ENCODE measurements at regions of chr11 and their contacts with region 1.

Region 1: GRCh38 chr11:18395735-18396504 is 1.6 kb downstream of the LDHA start:
- DNase-seq: peak; percentile 97
- H3K4me3 Mint-ChIP-seq: peak overlapping the region; percentile 99
- H3K27ac Mint-ChIP-seq: peak overlapping the region; percentile 96
- H3K4me1 Mint-ChIP-seq: peaks cover 61% of the 10 kb centered on the region
- H3K27me3 Mint-ChIP-seq: no peaks in the 10 kb centered on the region

Region 2: DNA sequence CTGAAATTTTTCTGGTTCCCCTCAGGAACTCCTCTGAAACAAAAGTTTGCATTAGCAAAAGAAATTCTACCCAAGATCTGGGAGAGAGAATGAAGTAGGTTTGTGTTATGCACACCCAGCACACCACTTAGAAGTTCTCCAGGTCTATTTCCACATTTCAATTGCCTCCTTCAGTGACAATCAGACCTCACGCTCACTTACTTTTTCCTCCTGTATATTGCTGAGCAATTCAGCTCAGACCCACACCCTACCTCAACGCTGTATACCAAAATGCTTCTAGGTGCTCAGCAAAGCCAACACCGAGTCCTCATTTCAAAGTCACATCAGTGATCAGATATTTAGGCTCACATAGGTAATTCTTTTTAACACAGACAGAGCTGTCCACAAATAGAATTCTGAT is 244.3 kb before region 1 on chr11:
- CTCF ChIA-PET with region 1: no interaction called
- POLR2A ChIA-PET with region 1: no interaction called
- DNase-seq: no peak
- H3K4me3 Mint-ChIP-seq: no peak overlapping the region
- H3K27ac Mint-ChIP-seq: no peak overlapping the region
- H3K4me1 Mint-ChIP-seq: no peaks in the 10 kb centered on the region
- H3K27me3 Mint-ChIP-seq: peaks cover 18% of the 10 kb centered on the region

Region 3: GRCh38 chr11:18243783-18244362 is 152.0 kb before region 1 on chr11:
- CTCF ChIA-PET with region 1: interaction called, 26 read pairs
- POLR2A ChIA-PET with region 1: interaction called, 59 read pairs
- DNase-seq: peak; percentile 76
- H3K4me3 Mint-ChIP-seq: no peak overlapping the region
- H3K27ac Mint-ChIP-seq: no peak overlapping the region
- H3K4me1 Mint-ChIP-seq: peaks cover 35% of the 10 kb centered on the region
- H3K27me3 Mint-ChIP-seq: peaks cover 17% of the 10 kb centered on the region

Region 4: GRCh38 chr11:18270102-18270501 is 125.8 kb before region 1 on chr11:
- CTCF ChIA-PET with region 1: no interaction called
- POLR2A ChIA-PET with region 1: no interaction called
- DNase-seq: no peak
- H3K4me3 Mint-ChIP-seq: no peak overlapping the region
- H3K27ac Mint-ChIP-seq: no peak overlapping the region
- H3K4me1 Mint-ChIP-seq: peaks cover 15% of the 10 kb centered on the region
- H3K27me3 Mint-ChIP-seq: no peaks in the 10 kb centered on the region

Region 5: DNA sequence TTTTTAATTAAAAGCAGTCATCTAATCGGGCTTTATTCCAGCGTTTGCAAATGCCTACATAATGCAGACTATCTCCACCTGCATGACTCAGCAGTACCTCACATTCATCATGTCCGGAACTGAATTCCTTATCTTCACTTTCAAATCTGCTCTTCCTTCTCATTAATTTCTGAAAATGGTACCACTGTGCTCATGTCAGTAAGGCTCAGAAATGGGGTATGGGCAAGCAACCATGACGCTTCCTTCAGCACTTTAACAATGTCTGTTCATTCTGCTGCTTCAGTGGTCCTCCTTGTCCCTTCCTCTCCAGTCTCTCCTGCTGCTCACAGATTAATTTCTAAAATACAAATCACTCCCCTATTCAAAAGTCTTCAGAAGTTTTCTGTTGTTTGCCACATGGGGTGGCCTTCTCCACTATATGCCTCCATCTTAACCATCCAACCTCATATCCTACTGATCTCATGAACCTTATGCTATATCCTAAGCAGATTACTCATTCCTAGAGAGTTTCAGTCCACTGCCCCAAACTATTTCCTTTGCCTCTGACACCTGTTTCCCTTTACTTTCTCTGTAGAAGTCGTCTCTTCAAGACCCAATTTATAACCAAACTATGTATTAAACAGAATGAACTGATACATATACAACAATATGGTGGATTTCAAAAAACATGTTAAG is 66.6 kb before region 1 on chr11:
- CTCF ChIA-PET with region 1: no interaction called
- POLR2A ChIA-PET with region 1: interaction called, 16 read pairs
- DNase-seq: no peak
- H3K4me3 Mint-ChIP-seq: peak overlapping the region; percentile 1
- H3K27ac Mint-ChIP-seq: peak overlapping the region; percentile 65
- H3K4me1 Mint-ChIP-seq: peaks cover 70% of the 10 kb centered on the region
- H3K27me3 Mint-ChIP-seq: no peaks in the 10 kb centered on the region

Region 6: GRCh38 chr11:18374956-18375355 is 21.0 kb before region 1 on chr11:
- CTCF ChIA-PET with region 1: interaction called, 6 read pairs
- POLR2A ChIA-PET with region 1: interaction called, 14 read pairs
- DNase-seq: no peak
- H3K4me3 Mint-ChIP-seq: no peak overlapping the region
- H3K27ac Mint-ChIP-seq: no peak overlapping the region
- H3K4me1 Mint-ChIP-seq: no peaks in the 10 kb centered on the region
- H3K27me3 Mint-ChIP-seq: no peaks in the 10 kb centered on the region

Region 7: DNA sequence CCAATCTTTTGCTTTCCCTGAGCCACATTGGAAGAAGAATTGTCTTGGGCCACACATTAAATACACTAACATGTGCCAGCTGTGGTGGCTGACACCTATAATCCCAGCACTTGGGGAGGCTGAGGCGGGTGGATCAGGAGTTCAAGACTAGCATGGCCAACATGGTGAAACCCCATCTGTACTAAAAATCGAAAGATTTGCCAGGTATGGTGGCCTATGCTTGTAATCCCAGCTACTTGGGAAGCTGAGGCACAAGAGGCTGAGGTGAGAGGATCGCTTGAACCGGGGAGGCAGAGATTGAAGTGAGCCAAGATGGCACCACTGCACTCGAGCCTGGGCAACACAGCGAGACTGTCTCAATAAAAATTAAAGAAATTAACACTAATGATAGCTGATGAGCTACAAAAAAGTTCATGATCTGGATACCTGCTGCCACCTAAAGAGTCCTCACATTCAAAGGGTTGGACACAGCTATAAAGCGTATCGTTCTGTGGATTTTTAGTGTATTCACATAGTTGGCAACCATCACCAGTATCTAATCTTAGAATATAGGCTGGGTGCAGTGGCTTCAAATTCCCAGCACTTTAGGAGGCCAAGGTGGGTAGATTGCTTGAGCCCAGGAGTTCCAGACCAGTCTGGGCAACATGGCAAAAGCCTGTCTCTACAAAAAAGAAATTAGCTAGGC is 12.8 kb after region 1 on chr11:
- CTCF ChIA-PET with region 1: interaction called, 4 read pairs
- POLR2A ChIA-PET with region 1: interaction called, 39 read pairs
- DNase-seq: no peak
- H3K4me3 Mint-ChIP-seq: no peak overlapping the region
- H3K27ac Mint-ChIP-seq: no peak overlapping the region
- H3K4me1 Mint-ChIP-seq: peaks cover 19% of the 10 kb centered on the region
- H3K27me3 Mint-ChIP-seq: no peaks in the 10 kb centered on the region

Region 8: DNA sequence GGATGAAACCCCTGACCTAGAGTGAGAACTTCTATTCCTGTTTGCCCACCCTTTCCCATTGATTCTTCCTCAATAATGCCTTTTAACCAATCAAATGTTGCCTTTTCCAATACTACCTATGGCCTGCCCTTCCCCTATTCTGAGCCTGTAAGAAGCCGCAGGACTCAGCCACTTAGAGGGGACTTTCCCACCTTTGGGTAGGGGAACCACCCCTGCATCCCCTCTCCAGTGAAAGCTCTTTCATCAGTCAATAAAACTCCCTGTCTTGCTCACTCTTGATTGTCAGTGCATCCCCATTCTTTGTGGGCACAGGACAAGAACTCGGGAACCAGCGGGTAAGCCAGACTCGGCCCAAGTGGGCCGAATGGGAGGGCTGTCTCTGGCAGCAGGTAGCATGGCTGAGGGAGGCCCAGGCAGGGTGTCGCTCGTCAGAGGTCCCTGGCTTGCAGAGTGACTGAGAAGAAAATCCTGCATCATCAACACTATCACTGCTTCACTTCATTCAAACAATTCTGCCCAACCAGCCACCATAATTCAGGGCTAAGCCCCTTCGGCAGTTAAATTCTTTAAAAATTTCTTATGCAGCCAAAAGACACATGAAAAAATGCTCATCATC is 90.1 kb after region 1 on chr11:
- CTCF ChIA-PET with region 1: no interaction called
- POLR2A ChIA-PET with region 1: no interaction called
- DNase-seq: no peak
- H3K4me3 Mint-ChIP-seq: no peak overlapping the region
- H3K27ac Mint-ChIP-seq: no peak overlapping the region
- H3K4me1 Mint-ChIP-seq: no peaks in the 10 kb centered on the region
- H3K27me3 Mint-ChIP-seq: no peaks in the 10 kb centered on the region

Measured in activated CD4-positive, alpha-beta memory T cell treated with anti-CD3 and anti-CD28 coated beads, Interleukin-2, amount 10 ng/mL, durations not matched to agents 7 days and 5 days (primary cell).